GM10248 (cell line): ENCODE measurements at regions of chr18 and their contacts with region 1.

Region 1: DNA sequence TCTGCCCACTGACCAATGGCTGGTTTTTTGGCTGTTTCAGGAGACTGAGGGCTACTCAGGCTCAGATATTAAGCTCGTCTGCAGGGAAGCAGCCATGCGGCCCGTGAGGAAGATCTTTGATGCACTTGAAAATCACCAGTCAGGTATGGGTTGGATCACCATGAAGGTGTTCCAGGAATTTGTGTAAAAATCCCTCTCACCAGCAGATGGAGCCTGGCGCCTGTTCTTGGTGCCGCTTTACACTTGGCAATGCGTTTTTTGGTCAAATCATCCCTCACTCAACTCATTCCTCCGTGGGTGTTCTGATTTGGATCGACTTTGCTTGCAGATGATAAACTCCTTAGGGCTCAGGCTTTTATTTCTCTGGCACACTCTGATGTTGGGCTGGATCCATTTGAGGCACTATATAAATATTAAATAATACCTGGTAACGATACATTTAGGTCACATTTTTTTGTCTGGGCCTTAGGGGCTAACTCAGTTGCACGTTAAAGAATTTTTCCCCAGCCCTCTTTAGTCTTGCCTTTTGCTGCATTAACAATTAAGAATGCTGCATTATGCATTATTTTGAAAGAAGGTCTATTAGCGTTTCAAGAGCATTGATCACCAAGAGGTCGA is 50.0 kb downstream of the HDHD2 start:
- DNase-seq: peak; percentile 47
- CTCF ChIP-seq: peak; percentile 71

Region 2: GRCh38 chr18:47110492-47111274 is 10.4 kb after region 1 on chr18:
- CTCF ChIA-PET with region 1: interaction called, 11 read pairs
- POLR2A ChIA-PET with region 1: no interaction called
- DNase-seq: no peak
- CTCF ChIP-seq: no peak